Activated CD4-positive, alpha-beta memory T cell treated with anti-CD3 and anti-CD28 coated beads for 36 hours (primary cell): ENCODE measurements at regions of chr5 and their contacts with region 1.

Region 1: GRCh38 chr5:96952118-96952750 is 16.4 kb downstream of the LNPEP start:
- DNase-seq: no peak
- H3K4me3 Mint-ChIP-seq: no peak overlapping the region
- H3K27ac Mint-ChIP-seq: peak overlapping the region; percentile 10
- H3K4me1 Mint-ChIP-seq: peaks cover 60% of the 10 kb centered on the region
- H3K27me3 Mint-ChIP-seq: no peaks in the 10 kb centered on the region

Region 2: DNA sequence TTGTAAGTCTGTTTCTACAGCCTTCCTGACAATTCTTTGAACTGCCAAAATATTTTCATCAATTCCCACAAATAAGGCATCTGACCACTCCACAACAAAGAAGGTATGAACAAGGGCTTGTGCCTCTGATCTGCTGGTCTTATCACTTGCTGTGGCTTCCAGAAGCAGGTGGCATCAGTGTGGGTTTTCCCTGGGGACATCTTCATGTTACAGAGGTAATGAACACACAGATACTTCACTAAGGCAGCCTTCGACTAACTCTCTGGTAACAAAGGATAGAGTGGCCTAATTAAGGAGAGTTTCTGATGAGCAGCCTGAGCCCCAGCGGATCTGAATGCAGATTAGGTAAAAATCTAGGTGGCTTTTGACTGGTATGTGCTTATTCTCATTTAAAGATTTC is 91.2 kb before region 1 on chr5:
- CTCF ChIA-PET with region 1: no interaction called
- POLR2A ChIA-PET with region 1: no interaction called
- intact Hi-C with region 1: no loop called
- DNase-seq: no peak
- H3K4me3 Mint-ChIP-seq: no peak overlapping the region
- H3K27ac Mint-ChIP-seq: no peak overlapping the region
- H3K4me1 Mint-ChIP-seq: peaks cover 19% of the 10 kb centered on the region
- H3K27me3 Mint-ChIP-seq: no peaks in the 10 kb centered on the region

Region 3: DNA sequence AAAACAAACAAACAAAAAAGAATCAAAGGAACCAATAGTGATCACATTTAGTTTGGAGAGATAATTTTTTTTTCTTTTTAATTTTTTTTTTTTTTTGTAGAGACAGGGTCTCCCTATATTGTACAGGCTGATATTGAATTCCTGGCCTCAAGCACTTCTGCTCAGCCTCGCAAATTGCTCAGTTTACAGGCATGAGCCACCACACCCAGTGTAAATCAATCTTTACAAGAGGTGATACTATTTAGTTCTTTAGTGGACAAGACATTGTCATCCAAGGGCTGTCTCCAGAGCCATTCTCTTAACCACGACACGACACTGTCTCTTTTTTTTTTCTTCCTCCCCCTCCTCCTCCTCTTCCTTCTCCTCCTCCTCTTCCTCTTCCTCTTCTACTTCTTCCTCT is 46.4 kb before region 1 on chr5:
- CTCF ChIA-PET with region 1: no interaction called
- POLR2A ChIA-PET with region 1: no interaction called
- intact Hi-C with region 1: no loop called
- DNase-seq: no peak
- H3K4me3 Mint-ChIP-seq: no peak overlapping the region
- H3K27ac Mint-ChIP-seq: no peak overlapping the region
- H3K4me1 Mint-ChIP-seq: peaks cover 15% of the 10 kb centered on the region
- H3K27me3 Mint-ChIP-seq: no peaks in the 10 kb centered on the region

Region 4: GRCh38 chr5:96919754-96920197 is 32.5 kb before region 1 on chr5:
- CTCF ChIA-PET with region 1: no interaction called
- POLR2A ChIA-PET with region 1: no interaction called
- intact Hi-C with region 1: no loop called
- DNase-seq: peak; percentile 33
- H3K4me3 Mint-ChIP-seq: no peak overlapping the region
- H3K27ac Mint-ChIP-seq: no peak overlapping the region
- H3K4me1 Mint-ChIP-seq: peaks cover 36% of the 10 kb centered on the region
- H3K27me3 Mint-ChIP-seq: no peaks in the 10 kb centered on the region

Region 5: GRCh38 chr5:96940586-96940985 is 11.6 kb before region 1 on chr5:
- CTCF ChIA-PET with region 1: interaction called, 4 read pairs
- POLR2A ChIA-PET with region 1: interaction called, 9 read pairs
- intact Hi-C with region 1: loop called (anchors 1 kb)
- DNase-seq: no peak
- H3K4me3 Mint-ChIP-seq: no peak overlapping the region
- H3K27ac Mint-ChIP-seq: no peak overlapping the region
- H3K4me1 Mint-ChIP-seq: peaks cover 62% of the 10 kb centered on the region
- H3K27me3 Mint-ChIP-seq: no peaks in the 10 kb centered on the region

Region 6: DNA sequence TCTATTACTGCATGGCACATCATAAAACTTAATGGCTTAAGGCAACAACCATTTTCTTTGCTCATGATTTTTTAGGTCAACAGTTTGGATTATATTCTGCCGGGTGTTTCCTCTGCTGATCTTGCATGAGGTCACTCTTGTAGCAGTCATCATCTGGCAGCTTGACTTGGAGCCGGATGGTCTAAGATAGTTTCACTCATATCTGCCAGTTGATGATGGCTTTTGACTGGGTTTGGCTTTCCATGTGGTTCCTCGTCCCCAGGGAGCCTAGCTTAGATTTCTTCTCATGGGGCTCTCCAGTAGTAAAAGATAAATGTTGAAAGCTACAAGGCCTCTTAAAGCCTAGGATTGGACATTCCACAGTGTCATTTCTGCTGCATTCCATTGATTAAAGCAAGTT is 11.0 kb after region 1 on chr5:
- CTCF ChIA-PET with region 1: no interaction called
- POLR2A ChIA-PET with region 1: no interaction called
- intact Hi-C with region 1: loop called (anchors 1 kb)
- DNase-seq: peak; percentile 41
- H3K4me3 Mint-ChIP-seq: peak overlapping the region; percentile 59
- H3K27ac Mint-ChIP-seq: peak overlapping the region; percentile 86
- H3K4me1 Mint-ChIP-seq: peaks cover 77% of the 10 kb centered on the region
- H3K27me3 Mint-ChIP-seq: no peaks in the 10 kb centered on the region